GM12878 (cell line): ENCODE measurements at regions of chr2 and their contacts with region 1.

Region 1: GRCh38 chr2:9984217-9984739 is 32.8 kb downstream of the GRHL1 start:
- DNase-seq: peak; percentile 13
- ATAC-seq: peak; percentile 88
- H3K4me3 ChIP-seq: no peak overlapping the region
- H3K27ac ChIP-seq: no peak overlapping the region
- H3K4me1 ChIP-seq: no peaks in the 10 kb centered on the region
- H3K27me3 ChIP-seq: no peaks in the 10 kb centered on the region
- CTCF ChIP-seq: peak; percentile 59 to 70 (median 63)
- EP300 ChIP-seq: no peak
- POLR2A ChIP-seq: no peak
- RAD21 ChIP-seq: peak; percentile 60

Region 2: GRCh38 chr2:9690252-9690651 is 294.0 kb before region 1 on chr2:
- CTCF ChIA-PET with region 1: no interaction called
- POLR2A ChIA-PET with region 1: no interaction called
- RAD21 ChIA-PET with region 1: no interaction called
- SMC1A ChIA-PET with region 1: no interaction called
- in situ Hi-C with region 1: no loop called
- intact Hi-C with region 1: no loop called
- DNase-seq: no peak
- ATAC-seq: no peak
- H3K4me3 ChIP-seq: no peak overlapping the region
- H3K27ac ChIP-seq: no peak overlapping the region
- H3K4me1 ChIP-seq: peaks cover 5% of the 10 kb centered on the region
- H3K27me3 ChIP-seq: no peaks in the 10 kb centered on the region
- CTCF ChIP-seq: no peak
- EP300 ChIP-seq: no peak
- POLR2A ChIP-seq: no peak
- RAD21 ChIP-seq: no peak

Region 3: DNA sequence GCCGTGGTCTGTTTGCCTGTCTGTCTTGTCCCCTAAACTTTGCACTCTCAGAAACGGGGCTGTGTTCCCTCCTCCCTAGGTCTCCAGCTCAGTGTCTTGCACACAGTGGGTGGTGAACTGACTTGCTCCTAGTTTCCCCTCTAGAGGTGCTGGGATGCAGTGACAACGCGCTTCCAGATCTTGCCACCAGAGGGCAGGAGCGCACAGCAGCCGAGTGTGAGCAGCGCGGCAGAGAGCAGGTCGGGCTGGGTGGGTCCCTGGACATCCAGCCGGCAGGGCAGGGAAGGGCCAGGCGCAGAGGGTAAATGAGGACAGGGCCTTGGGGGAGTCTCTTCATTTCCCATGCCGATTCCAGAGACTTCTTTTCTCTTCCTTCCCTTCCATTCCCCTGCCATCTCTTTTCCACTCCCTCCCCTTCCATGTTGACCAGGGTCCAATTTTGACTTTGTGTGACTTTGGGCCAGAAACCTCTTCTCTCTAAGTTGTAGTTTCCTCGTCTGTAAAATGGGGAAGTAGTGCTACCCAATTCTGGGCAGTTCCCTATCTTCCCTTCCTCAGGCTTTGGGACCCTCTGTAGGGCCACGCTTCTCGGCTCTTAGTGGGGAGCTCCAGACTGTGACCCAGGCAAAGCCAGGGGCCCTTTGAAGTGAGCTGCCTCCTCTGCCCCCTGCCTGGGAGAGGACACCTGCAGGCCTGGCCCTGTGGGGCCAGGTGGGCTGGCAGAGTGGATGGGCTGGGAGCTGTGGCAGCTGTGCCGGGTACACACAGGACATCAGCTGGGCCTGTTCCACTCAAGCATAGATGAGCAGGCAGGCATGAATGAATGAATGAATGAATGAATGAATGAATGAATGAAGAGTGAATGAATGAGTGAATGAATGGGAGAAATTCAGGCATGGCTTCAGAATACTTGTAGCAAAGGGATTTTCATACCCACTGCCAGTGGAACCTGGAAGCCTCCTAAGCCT is 184.3 kb before region 1 on chr2:
- CTCF ChIA-PET with region 1: interaction called, 37 read pairs
- POLR2A ChIA-PET with region 1: no interaction called
- RAD21 ChIA-PET with region 1: interaction called, 19 read pairs
- SMC1A ChIA-PET with region 1: interaction called, 25 read pairs
- in situ Hi-C with region 1: no loop called
- intact Hi-C with region 1: no loop called
- DNase-seq: peak; percentile 47
- ATAC-seq: peak; percentile 93
- H3K4me3 ChIP-seq: no peak overlapping the region; the same call in 1 of the 2 replicates
- H3K27ac ChIP-seq: no peak overlapping the region
- H3K4me1 ChIP-seq: peaks cover 11% of the 10 kb centered on the region
- H3K27me3 ChIP-seq: no peaks in the 10 kb centered on the region; a peak in 1 of 4 replicates
- CTCF ChIP-seq: peak; percentile 97 to 100 (median 98)
- EP300 ChIP-seq: no peak
- POLR2A ChIP-seq: no peak
- RAD21 ChIP-seq: peak; percentile 84

Region 4: GRCh38 chr2:9941996-9942390 is 42.3 kb before region 1 on chr2:
- CTCF ChIA-PET with region 1: interaction called, 11 read pairs
- POLR2A ChIA-PET with region 1: no interaction called
- RAD21 ChIA-PET with region 1: interaction called, 3 read pairs
- SMC1A ChIA-PET with region 1: interaction called, 3 read pairs
- in situ Hi-C with region 1: no loop called
- intact Hi-C with region 1: no loop called
- DNase-seq: no peak
- ATAC-seq: no peak
- H3K4me3 ChIP-seq: no peak overlapping the region
- H3K27ac ChIP-seq: no peak overlapping the region
- H3K4me1 ChIP-seq: peaks cover 6% of the 10 kb centered on the region; the same call in 1 of the 2 replicates
- H3K27me3 ChIP-seq: no peaks in the 10 kb centered on the region
- CTCF ChIP-seq: no peak
- EP300 ChIP-seq: no peak
- POLR2A ChIP-seq: no peak
- RAD21 ChIP-seq: no peak

Region 5: GRCh38 chr2:9967053-9967775 is 17.1 kb before region 1 on chr2:
- CTCF ChIA-PET with region 1: interaction called, 49 read pairs
- POLR2A ChIA-PET with region 1: interaction called, 3 read pairs
- RAD21 ChIA-PET with region 1: interaction called, 5 read pairs
- SMC1A ChIA-PET with region 1: interaction called, 24 read pairs
- in situ Hi-C with region 1: no loop called
- intact Hi-C with region 1: no loop called
- DNase-seq: peak; percentile 53
- ATAC-seq: peak; percentile 94
- H3K4me3 ChIP-seq: no peak overlapping the region
- H3K27ac ChIP-seq: no peak overlapping the region
- H3K4me1 ChIP-seq: peaks cover 19% of the 10 kb centered on the region
- H3K27me3 ChIP-seq: no peaks in the 10 kb centered on the region
- CTCF ChIP-seq: no peak
- EP300 ChIP-seq: peak in 1 of 2 experiments; percentile 88; a peak in 3 of 4 replicates
- POLR2A ChIP-seq: no peak
- RAD21 ChIP-seq: no peak

Region 6: GRCh38 chr2:10028988-10029874 is 45.0 kb after region 1 on chr2:
- CTCF ChIA-PET with region 1: interaction called, 33 read pairs
- POLR2A ChIA-PET with region 1: no interaction called
- RAD21 ChIA-PET with region 1: interaction called, 15 read pairs
- SMC1A ChIA-PET with region 1: interaction called, 19 read pairs
- in situ Hi-C with region 1: no loop called
- intact Hi-C with region 1: no loop called
- DNase-seq: no peak
- ATAC-seq: peak; percentile 89
- H3K4me3 ChIP-seq: no peak overlapping the region
- H3K27ac ChIP-seq: no peak overlapping the region
- H3K4me1 ChIP-seq: peaks cover 11% of the 10 kb centered on the region
- H3K27me3 ChIP-seq: no peaks in the 10 kb centered on the region
- CTCF ChIP-seq: 0 out of 6 replicates have a peak, but pooled peaks of 1 of the 3 experiments have one; percentile 3
- EP300 ChIP-seq: no peak
- POLR2A ChIP-seq: no peak
- RAD21 ChIP-seq: no peak

Region 7: DNA sequence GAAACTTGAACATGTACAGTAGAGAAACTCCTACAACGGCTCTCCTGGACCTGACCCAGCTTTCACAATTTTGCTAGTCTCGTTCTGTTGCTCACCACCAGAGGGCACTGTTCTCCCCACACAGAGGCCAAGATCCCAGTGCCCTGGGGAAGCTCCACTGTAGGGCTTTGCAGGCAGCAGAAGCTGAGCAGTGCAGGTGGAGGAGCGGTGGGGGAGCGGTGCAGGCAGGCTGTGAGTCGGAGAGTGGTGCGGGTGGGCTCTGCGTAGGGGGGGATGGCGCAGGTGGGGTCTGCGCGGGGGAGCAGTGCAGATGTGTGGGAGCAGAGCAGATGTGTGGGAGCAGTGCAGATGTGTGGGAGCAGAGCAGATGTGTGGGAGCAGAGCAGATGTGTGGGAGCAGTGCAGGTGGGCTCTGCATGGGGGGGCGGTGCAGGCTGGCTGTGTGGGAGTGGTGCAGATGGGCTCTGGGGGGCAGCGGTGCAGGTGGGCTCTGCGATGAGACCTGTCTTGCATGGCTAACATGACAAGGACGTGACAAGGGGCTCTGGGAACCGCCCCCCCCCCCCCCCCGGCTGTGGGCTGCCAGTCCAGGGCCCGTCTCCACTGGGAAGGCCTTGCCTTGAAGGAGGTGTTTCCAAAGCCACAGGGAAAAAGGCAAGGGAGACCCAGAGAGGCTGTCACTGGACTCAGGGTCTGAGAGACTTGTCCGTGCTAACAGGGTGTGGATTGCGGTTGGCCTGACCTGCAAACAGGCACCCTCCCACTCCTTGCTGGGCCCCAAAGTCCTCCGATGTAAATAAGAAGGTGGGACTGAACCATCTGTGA is 88.6 kb after region 1 on chr2:
- CTCF ChIA-PET with region 1: interaction called, 14 read pairs
- POLR2A ChIA-PET with region 1: no interaction called
- RAD21 ChIA-PET with region 1: interaction called, 10 read pairs
- SMC1A ChIA-PET with region 1: interaction called, 3 read pairs
- in situ Hi-C with region 1: no loop called
- intact Hi-C with region 1: no loop called
- DNase-seq: no peak
- ATAC-seq: peak; percentile 96
- H3K4me3 ChIP-seq: no peak overlapping the region
- H3K27ac ChIP-seq: no peak overlapping the region
- H3K4me1 ChIP-seq: peaks cover 21% of the 10 kb centered on the region
- H3K27me3 ChIP-seq: no peaks in the 10 kb centered on the region
- CTCF ChIP-seq: peak; percentile 84 to 94 (median 86); a peak in 5 of 6 replicates
- EP300 ChIP-seq: no peak
- POLR2A ChIP-seq: no peak
- RAD21 ChIP-seq: peak; percentile 92

Region 8: DNA sequence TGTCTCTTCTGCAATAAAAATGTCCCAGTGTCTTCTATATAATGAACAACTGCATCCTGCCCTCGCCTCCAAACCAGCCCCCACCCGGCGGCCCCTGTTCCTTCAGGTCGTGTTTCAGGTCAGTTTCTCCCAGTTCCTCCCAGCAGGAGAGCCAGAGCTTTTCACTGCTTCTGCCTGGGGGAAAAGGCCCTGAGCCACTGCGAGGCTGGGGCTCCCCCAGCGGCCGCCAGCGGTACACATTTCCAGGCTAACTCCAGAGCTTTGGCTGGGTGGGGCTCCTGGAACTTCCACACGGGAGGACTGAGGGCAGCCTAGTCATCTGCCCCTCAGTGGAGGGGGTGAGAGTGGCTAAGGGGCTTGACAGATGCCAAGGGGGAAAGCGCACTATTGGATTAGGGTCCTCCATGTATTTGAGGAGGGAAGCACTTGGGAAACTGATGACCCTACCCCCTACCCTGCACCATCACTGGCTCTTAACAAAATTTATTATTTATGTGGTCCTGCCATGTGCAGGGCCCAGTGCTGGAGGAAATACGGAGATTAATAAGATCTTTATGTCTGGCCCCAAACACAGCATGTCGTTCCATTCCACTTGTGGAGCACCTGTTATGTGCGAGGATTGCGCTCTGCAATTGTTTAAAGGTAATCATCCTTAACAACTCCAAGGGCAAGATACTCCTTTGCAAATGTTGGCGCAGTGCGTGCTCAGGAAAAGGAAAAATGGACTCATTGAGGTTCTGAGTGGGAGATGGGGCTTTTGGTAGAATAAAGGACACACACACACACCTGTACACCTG is 113.3 kb after region 1 on chr2:
- CTCF ChIA-PET with region 1: interaction called, 25 read pairs
- POLR2A ChIA-PET with region 1: no interaction called
- RAD21 ChIA-PET with region 1: interaction called, 8 read pairs
- SMC1A ChIA-PET with region 1: interaction called, 9 read pairs
- in situ Hi-C with region 1: no loop called
- intact Hi-C with region 1: no loop called
- DNase-seq: no peak
- ATAC-seq: peak; percentile 96
- H3K4me3 ChIP-seq: no peak overlapping the region
- H3K27ac ChIP-seq: no peak overlapping the region
- H3K4me1 ChIP-seq: peaks cover 2% of the 10 kb centered on the region; the same call in 1 of the 2 replicates
- H3K27me3 ChIP-seq: no peaks in the 10 kb centered on the region
- CTCF ChIP-seq: peak; percentile 91 to 99 (median 92)
- EP300 ChIP-seq: no peak
- POLR2A ChIP-seq: no peak
- RAD21 ChIP-seq: peak; percentile 80

Region 9: DNA sequence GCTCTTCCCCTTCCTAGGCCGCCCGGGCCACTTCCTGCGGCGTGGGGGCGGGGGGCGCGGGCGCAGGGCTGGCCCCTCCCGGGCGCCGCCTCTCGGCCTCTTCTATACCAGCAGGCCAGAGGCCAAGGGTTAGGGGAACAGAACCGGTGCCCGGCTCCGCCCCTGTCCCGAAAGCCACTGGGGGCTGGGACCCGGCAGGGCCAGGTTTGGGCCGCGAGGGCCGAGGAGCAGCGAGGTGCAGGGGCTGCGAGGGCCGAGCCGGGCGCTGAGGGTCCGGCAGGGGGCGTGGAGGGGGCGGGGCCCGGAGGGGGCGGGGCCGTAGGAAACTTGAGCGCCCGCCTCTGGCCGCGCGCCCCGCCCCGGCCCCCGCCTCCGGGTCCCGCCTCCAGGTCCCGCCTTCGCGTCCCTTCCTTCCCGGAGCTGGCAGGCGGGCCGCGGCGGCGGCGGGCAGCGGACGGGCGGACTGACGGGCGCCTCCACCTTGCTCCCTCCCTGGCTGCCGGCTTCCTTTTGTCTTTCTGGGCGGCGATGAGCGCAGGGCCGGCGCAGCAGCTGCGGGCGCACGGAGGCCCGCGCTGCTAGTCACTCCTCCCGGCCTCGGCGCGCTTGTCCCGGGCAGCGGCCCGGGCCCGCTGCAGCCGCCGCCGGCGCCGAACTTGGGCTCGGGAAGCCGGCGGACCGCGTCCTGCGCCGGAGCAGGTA is 318.4 kb after region 1 on chr2 and contains the start of gene HPCAL1:
- CTCF ChIA-PET with region 1: no interaction called
- POLR2A ChIA-PET with region 1: no interaction called
- RAD21 ChIA-PET with region 1: no interaction called
- SMC1A ChIA-PET with region 1: no interaction called
- in situ Hi-C with region 1: no loop called
- intact Hi-C with region 1: no loop called
- DNase-seq: peak; percentile 40
- ATAC-seq: peak; percentile 86
- H3K4me3 ChIP-seq: peak within 1 kb of the TSS; percentile 69
- H3K27ac ChIP-seq: peak within 1 kb of the TSS; percentile 61
- H3K4me1 ChIP-seq: peaks cover 16% of the 10 kb centered on the region
- H3K27me3 ChIP-seq: no peaks in the 10 kb centered on the region; a peak in 1 of 4 replicates
- CTCF ChIP-seq: peak; percentile 41 to 52 (median 45); a peak in 5 of 6 replicates
- EP300 ChIP-seq: no peak
- POLR2A ChIP-seq: no peak
- RAD21 ChIP-seq: peak; percentile 19; the same call in 1 of the 2 replicates
- polyA plus RNA-seq, gene HPCAL1: 0.40 to 1.3 TPM

Region 10: GRCh38 chr2:11398747-11399437 is 1414.6 kb after region 1 on chr2:
- CTCF ChIA-PET with region 1: no interaction called
- POLR2A ChIA-PET with region 1: no interaction called
- RAD21 ChIA-PET with region 1: no interaction called
- SMC1A ChIA-PET with region 1: no interaction called
- in situ Hi-C with region 1: no loop called
- intact Hi-C with region 1: no loop called
- DNase-seq: no peak
- ATAC-seq: no peak
- H3K4me3 ChIP-seq: no peak overlapping the region
- H3K27ac ChIP-seq: no peak overlapping the region
- H3K4me1 ChIP-seq: no peaks in the 10 kb centered on the region
- H3K27me3 ChIP-seq: no peaks in the 10 kb centered on the region; a peak in 1 of 4 replicates
- CTCF ChIP-seq: no peak
- EP300 ChIP-seq: no peak
- POLR2A ChIP-seq: no peak
- RAD21 ChIP-seq: no peak